ENCODE measurements at regions of chr2 and their contacts with region 1.

Region 1: DNA sequence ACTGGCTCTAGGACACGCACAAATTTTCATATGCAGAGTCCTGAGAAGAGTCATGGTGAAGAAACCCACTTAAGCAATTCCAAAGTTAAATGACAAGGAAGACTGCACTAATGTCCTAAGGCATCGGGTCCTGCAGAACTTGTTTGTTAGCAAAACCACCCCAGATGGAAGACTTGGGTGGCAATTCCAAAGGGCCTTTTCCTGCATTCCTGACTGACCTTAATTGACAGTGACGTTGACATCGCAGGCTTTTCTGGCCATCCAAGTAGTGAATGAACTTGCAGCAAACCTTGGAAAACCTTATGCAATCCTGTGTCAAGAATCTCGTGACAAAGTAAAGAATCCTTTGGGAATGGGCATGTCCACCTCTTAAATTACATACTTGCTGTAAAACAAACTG is 112.5 kb upstream of the SH3BP4 start:
- DNase-seq: no peak

Region 2: DNA sequence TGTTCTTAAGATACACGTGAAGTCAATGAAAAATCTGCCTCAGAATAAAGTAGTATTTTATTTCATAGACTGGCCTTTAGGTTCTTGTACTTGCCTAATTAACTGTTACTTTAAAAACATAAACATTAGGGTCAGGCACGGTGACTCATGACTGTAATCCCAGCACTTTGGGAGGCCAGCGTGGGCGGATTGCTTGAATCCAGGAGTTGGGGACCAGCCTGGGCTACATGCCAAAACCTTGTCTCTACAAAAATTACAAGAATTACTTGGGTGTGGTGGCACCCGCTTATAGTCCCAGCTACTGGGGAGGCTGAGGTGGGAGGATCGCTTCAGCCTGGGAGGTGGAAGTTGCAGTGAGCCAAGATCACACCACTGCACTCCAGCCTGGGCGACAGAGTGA is 1985.2 kb before region 1 on chr2:
- intact Hi-C with region 1: no loop called
- DNase-seq: no peak

Region 3: GRCh38 chr2:234763002-234763873 is 76.0 kb before region 1 on chr2:
- intact Hi-C with region 1: no loop called
- DNase-seq: peak; percentile 70

Region 4: DNA sequence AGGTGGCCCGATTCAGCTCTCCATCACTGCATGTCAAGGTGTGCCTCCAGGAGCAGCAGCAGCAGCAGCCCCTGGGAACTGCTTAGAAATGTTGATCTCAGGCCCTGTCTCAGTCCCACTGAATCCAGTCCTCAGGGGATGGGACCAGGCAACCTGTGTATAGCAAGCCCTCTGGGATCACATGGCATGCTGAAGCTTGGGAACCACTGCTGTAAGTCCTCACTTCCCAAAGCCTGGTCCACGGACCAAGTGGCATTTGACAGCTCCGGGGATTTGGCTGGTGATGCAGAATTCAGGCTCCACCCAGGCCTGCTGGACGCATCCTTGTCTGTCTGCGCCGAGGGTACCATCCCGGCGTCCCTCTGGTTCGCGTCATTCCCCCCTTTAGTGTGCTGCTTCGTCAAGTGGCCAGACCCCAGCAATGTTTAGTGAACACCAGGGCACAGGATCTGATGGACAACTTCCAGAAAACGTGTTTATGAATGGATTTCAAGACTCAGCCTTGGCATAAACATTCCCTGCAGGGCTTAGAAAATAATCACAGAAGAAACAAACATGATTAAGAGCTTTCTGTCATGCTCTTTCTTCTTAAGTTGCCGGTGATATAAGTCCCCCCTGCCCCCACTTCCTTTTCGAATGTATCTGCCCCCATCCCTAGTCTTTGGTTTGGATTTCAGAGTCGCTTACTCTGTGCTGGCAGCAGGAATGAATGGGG is 1094.9 kb after region 1 on chr2:
- intact Hi-C with region 1: loop called in 1 of 2 experiments (anchors 5 kb)
- DNase-seq: no peak

Region 5: DNA sequence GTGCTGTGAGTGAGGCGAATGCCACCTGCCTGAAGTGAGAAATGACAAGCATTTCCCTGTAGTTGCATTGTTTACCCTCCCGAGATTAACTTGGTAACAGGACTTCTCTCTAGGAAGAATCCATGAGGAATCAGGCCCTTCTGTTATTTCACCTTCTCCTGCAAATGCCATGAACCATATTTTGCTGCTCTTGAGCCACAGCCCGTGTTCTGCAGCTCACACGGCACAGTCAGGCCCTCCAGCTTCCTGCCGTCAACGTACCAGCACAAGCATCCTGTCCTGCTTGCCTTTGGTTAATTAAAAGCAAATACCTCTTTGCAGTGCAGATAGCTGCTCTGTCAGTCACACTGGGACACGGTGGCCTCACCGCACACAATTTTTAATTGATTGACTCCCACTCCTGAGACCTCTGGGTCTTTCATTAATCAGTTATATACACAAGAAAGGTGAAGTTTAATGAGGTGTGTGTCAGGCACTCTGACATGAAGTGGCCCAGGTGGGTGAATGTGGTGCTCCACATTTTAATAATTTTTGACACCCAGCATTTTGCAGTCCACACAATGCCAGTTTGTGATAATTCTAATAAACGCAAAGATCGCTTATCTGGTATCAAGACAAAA is 1520.3 kb after region 1 on chr2:
- intact Hi-C with region 1: no loop called
- DNase-seq: no peak